ENCODE measurements at regions of chr2 and their contacts with region 1.

Region 1: GRCh38 chr2:196200557-196200956 is 29.2 kb upstream of the STK17B start:
- DNase-seq: peak; percentile 83
- ATAC-seq: peak; percentile 94
- H3K4me3 ChIP-seq: no peak overlapping the region
- H3K27ac ChIP-seq: peak overlapping the region; percentile 79
- H3K4me1 ChIP-seq: peaks cover 18% of the 10 kb centered on the region
- H3K27me3 ChIP-seq: no peaks in the 10 kb centered on the region
- CTCF ChIP-seq: no peak
- EP300 ChIP-seq: peak; percentile 64 to 65
- POLR2A ChIP-seq: no peak
- RAD21 ChIP-seq: no peak

Region 2: DNA sequence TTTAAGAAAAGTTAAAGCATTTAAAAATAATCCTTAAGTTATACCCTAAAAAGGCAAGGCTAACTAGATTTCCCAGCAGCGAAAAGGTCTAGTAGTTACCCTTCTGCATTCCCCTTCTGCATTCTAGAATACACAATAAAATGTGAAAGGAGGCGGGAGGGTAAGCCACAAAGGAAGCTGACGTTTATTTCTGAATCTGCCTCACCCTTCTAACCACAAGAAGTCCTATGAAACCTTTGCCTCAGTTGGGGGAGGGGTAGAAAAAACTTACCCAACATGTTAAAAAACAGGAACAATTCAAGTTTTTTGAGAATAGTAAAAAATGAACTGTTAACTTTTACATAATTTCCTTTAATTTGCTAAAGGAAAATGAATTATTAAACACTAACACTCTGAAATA is 40.5 kb before region 1 on chr2:
- CTCF ChIA-PET with region 1: interaction called, 11 read pairs
- POLR2A ChIA-PET with region 1: interaction called, 5 read pairs
- RAD21 ChIA-PET with region 1: interaction called, 4 read pairs
- SMC1A ChIA-PET with region 1: interaction called, 14 read pairs
- in situ Hi-C with region 1: no loop called
- intact Hi-C with region 1: no loop called
- DNase-seq: peak; percentile 86
- ATAC-seq: peak; percentile 64
- H3K4me3 ChIP-seq: no peak overlapping the region; the same call in 1 of the 2 replicates
- H3K27ac ChIP-seq: peak overlapping the region; percentile 77
- H3K4me1 ChIP-seq: peaks cover 29% of the 10 kb centered on the region
- H3K27me3 ChIP-seq: no peaks in the 10 kb centered on the region
- CTCF ChIP-seq: no peak
- EP300 ChIP-seq: peak; percentile 93
- POLR2A ChIP-seq: no peak
- RAD21 ChIP-seq: peak; percentile 17; the same call in 1 of the 2 replicates

Region 3: DNA sequence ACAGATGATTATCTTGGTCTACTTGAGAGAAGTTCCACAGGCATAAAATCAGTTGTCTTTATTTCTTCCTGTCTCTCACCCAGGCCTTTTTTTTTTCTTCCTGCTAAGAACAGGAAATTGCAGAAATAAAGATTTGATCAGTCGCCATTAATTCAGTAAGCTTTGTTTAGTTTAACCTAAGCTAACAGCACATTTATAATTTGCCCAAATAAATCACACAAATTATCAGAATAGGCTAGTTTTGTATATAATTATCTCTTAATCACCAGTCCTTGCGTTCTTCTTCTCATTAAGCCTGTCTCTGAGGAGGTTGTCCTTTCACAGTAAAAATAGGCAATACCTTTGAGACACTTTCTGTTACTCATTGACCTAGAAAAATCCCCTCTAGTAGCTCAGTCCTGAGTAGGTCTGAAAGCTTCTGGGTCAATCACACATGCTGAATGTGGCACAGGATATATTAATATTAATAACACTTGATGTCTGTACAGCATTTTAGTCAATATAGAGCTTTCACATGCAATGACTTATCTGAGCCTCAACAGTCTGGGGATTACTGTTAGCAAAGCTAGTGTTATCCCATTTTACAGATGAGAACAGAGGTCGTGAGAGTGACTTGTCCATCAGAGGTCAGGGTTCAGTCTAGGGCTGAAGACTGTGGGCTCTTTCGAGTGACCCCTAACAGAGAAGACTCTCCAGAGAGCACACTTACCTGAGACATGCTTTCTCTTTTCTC is 18.0 kb before region 1 on chr2:
- CTCF ChIA-PET with region 1: interaction called, 13 read pairs
- POLR2A ChIA-PET with region 1: interaction called, 22 read pairs
- RAD21 ChIA-PET with region 1: interaction called, 39 read pairs
- SMC1A ChIA-PET with region 1: interaction called, 104 read pairs
- in situ Hi-C with region 1: no loop called
- intact Hi-C with region 1: no loop called
- DNase-seq: peak; percentile 71
- ATAC-seq: peak; percentile 87
- H3K4me3 ChIP-seq: no peak overlapping the region
- H3K27ac ChIP-seq: peak overlapping the region; percentile 42
- H3K4me1 ChIP-seq: peaks cover 27% of the 10 kb centered on the region
- H3K27me3 ChIP-seq: no peaks in the 10 kb centered on the region
- CTCF ChIP-seq: no peak
- EP300 ChIP-seq: peak; percentile 31 to 64
- POLR2A ChIP-seq: no peak
- RAD21 ChIP-seq: no peak

Region 4: DNA sequence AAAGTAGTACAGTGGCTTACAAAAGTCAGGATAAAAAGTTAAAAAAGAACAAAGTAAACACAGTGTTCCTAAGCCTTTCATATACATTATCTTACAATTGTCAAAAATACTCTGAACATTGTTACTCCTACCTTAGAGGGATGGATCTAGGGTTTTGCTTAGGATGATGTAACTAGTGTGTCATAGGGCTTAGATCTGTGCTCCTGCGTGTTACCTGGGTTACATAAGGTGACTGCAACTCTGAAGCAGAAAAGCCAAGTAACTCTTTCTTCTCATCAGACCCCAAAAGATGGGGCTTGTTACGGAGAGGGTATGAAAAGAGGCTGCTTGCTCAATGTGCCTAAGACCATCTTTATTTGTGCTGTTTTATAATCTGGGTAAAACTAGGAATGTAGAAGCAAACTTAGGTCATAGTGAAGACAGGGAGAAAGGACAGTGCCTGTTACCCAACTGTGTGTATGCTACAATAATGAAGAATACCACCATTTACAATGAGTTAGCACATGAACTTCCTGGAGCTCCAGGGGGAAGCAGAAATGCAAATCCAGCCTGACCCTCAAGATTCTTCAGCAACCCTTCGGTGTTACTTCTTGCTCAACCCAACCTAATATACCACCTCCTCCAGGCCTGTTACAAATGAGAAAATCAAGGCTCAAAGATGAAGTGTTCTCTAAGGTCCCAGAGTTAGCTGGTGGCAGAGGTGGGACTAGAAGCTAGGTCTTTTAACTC is 12.9 kb after region 1 on chr2:
- CTCF ChIA-PET with region 1: interaction called, 3 read pairs
- POLR2A ChIA-PET with region 1: interaction called, 17 read pairs
- RAD21 ChIA-PET with region 1: interaction called, 14 read pairs
- SMC1A ChIA-PET with region 1: interaction called, 22 read pairs
- in situ Hi-C with region 1: no loop called
- intact Hi-C with region 1: no loop called
- DNase-seq: no peak
- ATAC-seq: no peak
- H3K4me3 ChIP-seq: no peak overlapping the region
- H3K27ac ChIP-seq: no peak overlapping the region
- H3K4me1 ChIP-seq: peaks cover 14% of the 10 kb centered on the region
- H3K27me3 ChIP-seq: no peaks in the 10 kb centered on the region
- CTCF ChIP-seq: no peak
- EP300 ChIP-seq: no peak
- POLR2A ChIP-seq: no peak
- RAD21 ChIP-seq: no peak

Region 5: GRCh38 chr2:196239622-196240587 is 39.3 kb after region 1 on chr2:
- CTCF ChIA-PET with region 1: interaction called, 8 read pairs
- POLR2A ChIA-PET with region 1: interaction called, 7 read pairs
- RAD21 ChIA-PET with region 1: interaction called, 42 read pairs
- SMC1A ChIA-PET with region 1: interaction called, 52 read pairs
- in situ Hi-C with region 1: no loop called
- intact Hi-C with region 1: loop called (anchors 2 kb)
- DNase-seq: peak; percentile 86
- ATAC-seq: peak; percentile 79
- H3K4me3 ChIP-seq: no peak overlapping the region
- H3K27ac ChIP-seq: peak overlapping the region; percentile 75
- H3K4me1 ChIP-seq: peaks cover 36% of the 10 kb centered on the region
- H3K27me3 ChIP-seq: no peaks in the 10 kb centered on the region
- CTCF ChIP-seq: 0 out of 6 replicates have a peak, but pooled peaks of 1 of the 3 experiments have one; percentile 3
- EP300 ChIP-seq: peak; percentile 74 to 85
- POLR2A ChIP-seq: no peak
- RAD21 ChIP-seq: 0 out of 2 replicates have a peak, but pooled peaks have one; percentile 19